MCF 10A (cell line): ENCODE measurements at regions of chr3 and their contacts with region 1.

Region 1: GRCh38 chr3:9843715-9844438 is at the start of gene RPUSD3:
- DNase-seq: peak; percentile 95
- H3K4me3 Mint-ChIP-seq: peak within 1 kb of the TSS; percentile 100
- H3K27ac Mint-ChIP-seq: peak within 1 kb of the TSS; percentile 92
- H3K4me1 Mint-ChIP-seq: peaks cover 14% of the 10 kb centered on the region
- H3K27me3 Mint-ChIP-seq: no peaks in the 10 kb centered on the region
- CTCF ChIP-seq: no peak
- total RNA-seq, gene RPUSD3: 40.3 and 40.7 TPM in 2 replicates

Region 2: GRCh38 chr3:9826815-9827567 is 16.9 kb before region 1 on chr3:
- CTCF ChIA-PET with region 1: interaction called, 4 read pairs
- POLR2A ChIA-PET with region 1: interaction called, 29 read pairs
- intact Hi-C with region 1: no loop called
- DNase-seq: peak; percentile 41
- H3K4me3 Mint-ChIP-seq: no peak overlapping the region
- H3K27ac Mint-ChIP-seq: no peak overlapping the region
- H3K4me1 Mint-ChIP-seq: no peaks in the 10 kb centered on the region
- H3K27me3 Mint-ChIP-seq: no peaks in the 10 kb centered on the region
- CTCF ChIP-seq: peak; percentile 34

Region 3: DNA sequence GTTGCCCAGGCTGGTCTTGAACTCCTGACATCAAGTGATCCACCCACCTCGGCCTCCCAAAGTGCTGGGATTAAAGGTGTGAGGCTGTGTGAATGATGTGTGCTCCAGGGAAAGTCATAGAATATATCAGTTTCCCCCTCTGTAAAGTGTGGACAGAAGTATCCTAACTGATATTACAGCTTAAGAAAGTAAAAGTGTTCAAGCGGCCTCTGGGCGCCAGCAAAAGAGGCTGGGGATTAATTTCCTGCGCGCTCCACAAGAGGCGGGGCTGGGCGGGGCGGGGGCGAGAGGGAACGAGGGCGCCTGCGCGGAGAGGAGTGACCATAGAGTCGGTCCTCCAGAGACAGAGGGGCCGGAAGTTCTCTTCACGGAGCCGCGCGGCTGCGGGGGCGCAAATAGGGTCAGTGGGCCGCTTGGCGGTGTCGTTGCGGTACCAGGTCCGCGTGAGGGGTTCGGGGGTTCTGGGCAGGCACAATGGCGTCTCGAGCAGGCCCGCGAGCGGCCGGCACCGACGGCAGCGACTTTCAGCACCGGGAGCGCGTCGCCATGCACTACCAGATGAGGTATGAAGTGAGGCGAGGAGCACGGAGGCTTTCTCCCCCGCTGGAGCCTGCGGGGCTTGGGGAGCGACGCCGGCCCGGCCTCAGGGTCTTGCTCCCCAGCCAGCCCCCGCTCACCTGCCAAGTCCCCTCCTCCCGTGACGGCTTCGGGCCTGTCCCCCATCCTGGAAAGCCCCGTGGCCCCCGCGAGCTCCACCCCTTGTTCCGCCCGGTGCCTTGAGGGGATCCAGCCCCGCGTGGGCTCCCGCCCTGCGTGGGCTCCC is 46.6 kb after region 1 on chr3 and contains the start of gene JAGN1:
- CTCF ChIA-PET with region 1: interaction called, 16 read pairs
- POLR2A ChIA-PET with region 1: interaction called, 20 read pairs
- intact Hi-C with region 1: no loop called
- DNase-seq: peak; percentile 90
- H3K4me3 Mint-ChIP-seq: peak within 1 kb of the TSS; percentile 91
- H3K27ac Mint-ChIP-seq: peak within 1 kb of the TSS; percentile 98
- H3K4me1 Mint-ChIP-seq: peaks cover 45% of the 10 kb centered on the region
- H3K27me3 Mint-ChIP-seq: no peaks in the 10 kb centered on the region
- CTCF ChIP-seq: no peak
- total RNA-seq, gene JAGN1: 49.7 and 55.4 TPM in 2 replicates

Region 4: GRCh38 chr3:9915254-9916141 is 71.6 kb after region 1 on chr3:
- CTCF ChIA-PET with region 1: interaction called, 16 read pairs
- POLR2A ChIA-PET with region 1: interaction called, 16 read pairs
- intact Hi-C with region 1: loop called (anchors 1 kb)
- DNase-seq: no peak
- H3K4me3 Mint-ChIP-seq: no peak overlapping the region
- H3K27ac Mint-ChIP-seq: no peak overlapping the region
- H3K4me1 Mint-ChIP-seq: peaks cover 21% of the 10 kb centered on the region
- H3K27me3 Mint-ChIP-seq: no peaks in the 10 kb centered on the region
- CTCF ChIP-seq: no peak

Region 5: GRCh38 chr3:10286596-10287330 is 442.9 kb after region 1 on chr3:
- CTCF ChIA-PET with region 1: no interaction called
- POLR2A ChIA-PET with region 1: no interaction called
- intact Hi-C with region 1: loop called (anchors 10 kb)
- DNase-seq: peak; percentile 83
- H3K4me3 Mint-ChIP-seq: no peak overlapping the region
- H3K27ac Mint-ChIP-seq: no peak overlapping the region
- H3K4me1 Mint-ChIP-seq: no peaks in the 10 kb centered on the region
- H3K27me3 Mint-ChIP-seq: no peaks in the 10 kb centered on the region
- CTCF ChIP-seq: peak; percentile 53